MCF 10A (cell line): ENCODE measurements at regions of chr1 and their contacts with region 1.

Region 1: GRCh38 chr1:77538956-77539518 is 143.4 kb downstream of the ZZZ3 start:
- DNase-seq: peak; percentile 73
- H3K4me3 Mint-ChIP-seq: peak overlapping the region; percentile 60
- H3K27ac Mint-ChIP-seq: peak overlapping the region; percentile 93
- H3K4me1 Mint-ChIP-seq: peaks cover 44% of the 10 kb centered on the region
- H3K27me3 Mint-ChIP-seq: no peaks in the 10 kb centered on the region
- CTCF ChIP-seq: no peak

Region 2: DNA sequence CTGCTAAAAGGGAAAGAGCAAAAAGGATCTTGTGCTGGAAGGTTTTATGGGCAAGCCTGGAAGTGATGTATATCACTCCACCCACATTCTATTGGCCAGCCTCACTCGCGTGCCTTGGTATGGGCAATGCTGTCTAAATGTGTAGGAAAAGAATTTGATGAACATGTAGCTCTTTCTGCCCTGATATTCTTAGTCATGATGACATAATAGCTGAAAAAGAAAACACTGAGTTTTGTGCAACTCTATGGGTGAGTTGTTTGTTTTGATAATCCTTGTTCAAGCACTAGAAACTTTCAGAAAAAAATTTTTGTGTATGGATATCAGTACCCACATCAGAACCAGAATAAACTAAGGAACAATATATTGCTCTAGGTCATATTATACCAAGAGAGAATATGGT is 903.3 kb before region 1 on chr1:
- CTCF ChIA-PET with region 1: no interaction called
- POLR2A ChIA-PET with region 1: no interaction called
- intact Hi-C with region 1: loop called (anchors 5 kb)
- DNase-seq: peak; percentile 70
- H3K4me3 Mint-ChIP-seq: no peak overlapping the region
- H3K27ac Mint-ChIP-seq: no peak overlapping the region
- H3K4me1 Mint-ChIP-seq: peaks cover 36% of the 10 kb centered on the region
- H3K27me3 Mint-ChIP-seq: no peaks in the 10 kb centered on the region
- CTCF ChIP-seq: no peak

Region 3: GRCh38 chr1:76770979-76771378 is 768.1 kb before region 1 on chr1:
- CTCF ChIA-PET with region 1: no interaction called
- POLR2A ChIA-PET with region 1: no interaction called
- intact Hi-C with region 1: no loop called
- DNase-seq: no peak
- H3K4me3 Mint-ChIP-seq: no peak overlapping the region
- H3K27ac Mint-ChIP-seq: no peak overlapping the region
- H3K4me1 Mint-ChIP-seq: no peaks in the 10 kb centered on the region
- H3K27me3 Mint-ChIP-seq: peaks cover 38% of the 10 kb centered on the region
- CTCF ChIP-seq: no peak

Region 4: GRCh38 chr1:77557053-77557452 is 18.0 kb after region 1 on chr1:
- CTCF ChIA-PET with region 1: no interaction called
- POLR2A ChIA-PET with region 1: interaction called, 12 read pairs
- intact Hi-C with region 1: no loop called
- DNase-seq: no peak
- H3K4me3 Mint-ChIP-seq: no peak overlapping the region
- H3K27ac Mint-ChIP-seq: no peak overlapping the region
- H3K4me1 Mint-ChIP-seq: no peaks in the 10 kb centered on the region
- H3K27me3 Mint-ChIP-seq: no peaks in the 10 kb centered on the region
- CTCF ChIP-seq: no peak